Motor neuron (in vitro differentiated cells): ENCODE measurements at regions of chr12 and their contacts with region 1.

Region 1: GRCh38 chr12:112243255-112244110 is 118.1 kb downstream of the TRAFD1 start:
- ATAC-seq: no peak
- H3K4me3 ChIP-seq: no peak overlapping the region
- H3K27ac ChIP-seq: no peak overlapping the region
- H3K4me1 ChIP-seq: no peaks in the 10 kb centered on the region

Region 2: GRCh38 chr12:112025808-112026375 is 217.6 kb before region 1 on chr12:
- in situ Hi-C with region 1: loop called in 1 of 9 experiments (anchors 25 kb)
- ATAC-seq: peak in 2 of 8 experiments; percentile 19 to 54
- H3K4me3 ChIP-seq: no peak overlapping the region
- H3K27ac ChIP-seq: no peak overlapping the region
- H3K4me1 ChIP-seq: peaks cover 0 to 3% of the 10 kb centered on the region in 2 donors

Region 3: GRCh38 chr12:112061137-112061536 is 182.3 kb before region 1 on chr12:
- in situ Hi-C with region 1: loop called in 1 of 9 experiments (anchors 25 kb)
- ATAC-seq: no peak
- H3K4me3 ChIP-seq: no peak overlapping the region
- H3K27ac ChIP-seq: no peak overlapping the region
- H3K4me1 ChIP-seq: no peaks in the 10 kb centered on the region